Natural killer cell (primary cell): ENCODE measurements at regions of chr15 and their contacts with region 1.

Region 1: DNA sequence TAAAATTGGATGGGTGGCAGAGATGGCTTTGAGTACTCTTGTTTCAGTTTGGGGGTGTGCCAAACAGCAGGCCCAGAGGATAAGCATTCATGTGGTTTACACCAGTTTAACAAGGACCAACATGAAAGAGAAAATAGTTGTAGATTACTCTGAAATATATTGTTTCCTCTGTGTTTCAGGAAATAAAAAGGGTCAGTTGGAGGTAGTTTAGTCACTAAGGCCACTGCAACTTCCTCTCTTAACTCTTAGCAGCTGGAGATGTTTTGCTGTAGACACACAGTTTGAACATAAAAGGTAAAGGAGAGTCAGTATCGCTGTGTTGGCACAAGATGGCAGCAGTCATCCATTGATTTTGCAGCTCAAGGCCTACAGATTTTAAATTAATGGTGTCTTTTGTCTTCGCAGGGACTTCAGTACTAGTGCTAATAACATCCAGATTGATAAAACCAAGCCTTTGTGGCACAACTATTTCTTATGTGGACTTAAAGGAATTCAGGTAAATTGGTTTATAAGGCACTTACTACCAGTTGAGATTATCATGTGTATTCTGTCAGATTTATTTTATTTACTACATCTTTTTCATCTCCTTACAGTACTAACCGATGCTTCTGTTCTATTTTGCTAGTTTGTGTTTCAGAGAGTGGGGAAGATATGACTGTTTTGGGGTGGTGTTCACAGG is 65.5 kb downstream of the GALK2 start:
- DNase-seq: peak; percentile 39 to 71
- ATAC-seq: peak; percentile 84 to 96 (median 89)
- H3K4me3 ChIP-seq: no peak overlapping the region
- H3K4me3 Mint-ChIP-seq: no peak overlapping the region
- H3K27ac ChIP-seq: peak overlapping the region; percentile 18
- H3K27ac Mint-ChIP-seq: peak overlapping the region; percentile 82 to 85
- H3K4me1 ChIP-seq: no peaks in the 10 kb centered on the region
- H3K4me1 Mint-ChIP-seq: peaks cover 10% of the 10 kb centered on the region in 2 donors
- H3K27me3 ChIP-seq: no peaks in the 10 kb centered on the region
- H3K27me3 Mint-ChIP-seq: no peaks in the 10 kb centered on the region
- CTCF ChIP-seq: peak; percentile 81

Region 2: DNA sequence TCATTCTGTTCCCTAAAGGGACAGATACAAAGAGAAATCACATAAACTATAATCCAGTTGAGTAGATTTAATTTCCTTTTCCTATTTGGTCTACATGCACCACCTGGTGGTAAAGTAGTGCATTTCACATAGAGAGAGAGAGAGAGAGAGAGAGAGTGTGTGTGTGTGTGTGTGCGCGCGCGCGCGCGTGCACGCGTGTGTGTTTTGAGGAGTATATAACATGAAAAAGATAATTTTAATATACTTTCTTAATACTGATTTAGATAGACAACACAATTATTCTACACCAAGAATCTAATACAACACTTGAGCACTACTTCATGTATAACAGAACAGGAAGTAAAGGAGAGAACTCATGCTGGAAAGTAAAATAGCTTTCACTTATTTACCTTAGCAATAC is 186.4 kb after region 1 on chr15:
- intact Hi-C with region 1: loop called (anchors 1 kb)
- DNase-seq: peak; percentile 27 to 70
- ATAC-seq: peak; percentile 50 to 84 (median 76)
- H3K4me3 ChIP-seq: no peak overlapping the region
- H3K4me3 Mint-ChIP-seq: peak overlapping the region; percentile 82
- H3K27ac ChIP-seq: no peak overlapping the region
- H3K27ac Mint-ChIP-seq: peak overlapping the region; percentile 86 to 90
- H3K4me1 ChIP-seq: no peaks in the 10 kb centered on the region
- H3K4me1 Mint-ChIP-seq: peaks cover 6 to 7% of the 10 kb centered on the region in 2 donors
- H3K27me3 ChIP-seq: no peaks in the 10 kb centered on the region
- H3K27me3 Mint-ChIP-seq: peaks cover 6 to 20% of the 10 kb centered on the region in 2 donors
- CTCF ChIP-seq: peak; percentile 82

Region 3: DNA sequence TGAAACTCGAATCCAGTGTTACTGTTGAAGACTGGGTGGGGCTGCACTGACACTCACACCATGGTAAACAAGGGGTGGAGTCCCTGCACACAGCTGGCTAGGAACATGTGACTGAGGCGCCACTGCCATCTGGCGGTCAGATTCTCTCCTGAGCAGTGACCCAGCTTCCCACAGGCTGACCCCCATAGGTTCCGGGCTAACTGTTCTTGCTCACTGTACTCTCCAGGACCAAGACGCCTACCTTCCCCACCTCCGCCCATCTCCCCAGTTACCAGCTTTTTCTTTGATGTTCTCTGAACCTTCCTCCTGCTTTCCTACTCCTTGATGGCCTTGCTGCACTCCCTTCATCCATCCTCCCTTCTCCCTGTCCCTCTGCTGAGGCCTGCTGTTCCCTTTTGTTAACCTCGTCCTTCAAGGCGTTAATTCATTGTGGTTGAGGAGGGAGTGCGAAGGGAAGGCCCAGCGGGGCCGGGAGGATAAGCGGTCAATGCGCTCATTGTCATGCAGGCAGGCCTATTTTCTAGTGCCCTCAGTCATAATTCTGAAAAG is 768.3 kb after region 1 on chr15:
- intact Hi-C with region 1: loop called (anchors 1 kb)
- DNase-seq: peak; percentile 74 to 79
- ATAC-seq: peak; percentile 97 to 99 (median 99)
- H3K4me3 ChIP-seq: no peak overlapping the region
- H3K4me3 Mint-ChIP-seq: peak overlapping the region; percentile 75
- H3K27ac ChIP-seq: peak overlapping the region; percentile 66
- H3K27ac Mint-ChIP-seq: peak overlapping the region; percentile 88 to 95
- H3K4me1 ChIP-seq: peaks cover 13% of the 10 kb centered on the region
- H3K4me1 Mint-ChIP-seq: peaks cover 25 to 30% of the 10 kb centered on the region in 2 donors
- H3K27me3 ChIP-seq: no peaks in the 10 kb centered on the region
- H3K27me3 Mint-ChIP-seq: no peaks in the 10 kb centered on the region
- CTCF ChIP-seq: peak; percentile 73

Region 4: GRCh38 chr15:50145451-50145872 is 909.9 kb after region 1 on chr15:
- intact Hi-C with region 1: loop called (anchors 1 kb)
- DNase-seq: peak in 1 of 2 donors; percentile 71
- ATAC-seq: peak; percentile 56 to 67 (median 62)
- H3K4me3 ChIP-seq: no peak overlapping the region
- H3K4me3 Mint-ChIP-seq: no peak overlapping the region
- H3K27ac ChIP-seq: no peak overlapping the region
- H3K27ac Mint-ChIP-seq: no peak overlapping the region
- H3K4me1 ChIP-seq: no peaks in the 10 kb centered on the region
- H3K4me1 Mint-ChIP-seq: peaks cover 0 to 5% of the 10 kb centered on the region in 2 donors
- H3K27me3 ChIP-seq: no peaks in the 10 kb centered on the region
- H3K27me3 Mint-ChIP-seq: no peaks in the 10 kb centered on the region
- CTCF ChIP-seq: peak; percentile 81